ENCODE measurements at regions of chr1 and their contacts with region 1.

Region 1: GRCh38 chr1:48688102-48688760 is 88.5 kb downstream of the BEND5 start:
- DNase-seq: no peak
- H3K4me3 ChIP-seq: no peak overlapping the region
- H3K27ac ChIP-seq: no peak overlapping the region
- H3K4me1 ChIP-seq: peaks cover 0 to 5% (median 0%) of the 10 kb centered on the region in 4 experiments; a peak in 1 of 7 replicates
- H3K27me3 ChIP-seq: no peaks in the 10 kb centered on the region
- CTCF ChIP-seq: peak in 2 of 3 experiments; percentile 38 to 74; a peak in 2 of 4 replicates
- EP300 ChIP-seq: no peak
- POLR2A ChIP-seq: no peak
- RAD21 ChIP-seq: peak; percentile 40 to 46; a peak in 3 of 4 replicates

Region 2: DNA sequence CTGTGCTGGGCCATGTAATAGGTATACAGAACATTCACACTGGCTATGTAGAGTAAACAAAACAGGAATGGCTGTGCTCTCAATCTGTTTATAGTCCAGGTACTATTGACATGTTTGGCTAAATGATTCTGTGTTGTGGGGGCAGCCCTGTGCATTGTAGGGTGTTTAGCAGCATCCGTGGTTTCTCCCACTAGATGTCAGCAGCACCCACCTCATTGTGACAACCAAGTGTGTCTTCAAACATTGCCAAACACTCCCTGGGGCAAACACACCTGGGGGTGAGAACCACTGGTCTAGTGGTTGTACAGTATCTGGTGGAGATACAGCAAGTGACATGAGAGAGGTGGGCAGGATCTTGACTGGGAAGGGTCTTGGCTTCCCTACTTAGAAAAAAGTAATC is 135.8 kb before region 1 on chr1:
- CTCF ChIA-PET with region 1: no interaction called
- POLR2A ChIA-PET with region 1: no interaction called
- DNase-seq: peak in 1 of 2 experiments; percentile 49
- H3K4me3 ChIP-seq: no peak overlapping the region
- H3K27ac ChIP-seq: no peak overlapping the region
- H3K4me1 ChIP-seq: peaks cover 0 to 5% (median 1%) of the 10 kb centered on the region in 4 experiments; a peak in 1 of 7 replicates
- H3K27me3 ChIP-seq: no peaks in the 10 kb centered on the region
- CTCF ChIP-seq: peak; percentile 43 to 63 (median 47)
- EP300 ChIP-seq: no peak
- POLR2A ChIP-seq: no peak
- RAD21 ChIP-seq: peak; percentile 76 to 78

Region 3: DNA sequence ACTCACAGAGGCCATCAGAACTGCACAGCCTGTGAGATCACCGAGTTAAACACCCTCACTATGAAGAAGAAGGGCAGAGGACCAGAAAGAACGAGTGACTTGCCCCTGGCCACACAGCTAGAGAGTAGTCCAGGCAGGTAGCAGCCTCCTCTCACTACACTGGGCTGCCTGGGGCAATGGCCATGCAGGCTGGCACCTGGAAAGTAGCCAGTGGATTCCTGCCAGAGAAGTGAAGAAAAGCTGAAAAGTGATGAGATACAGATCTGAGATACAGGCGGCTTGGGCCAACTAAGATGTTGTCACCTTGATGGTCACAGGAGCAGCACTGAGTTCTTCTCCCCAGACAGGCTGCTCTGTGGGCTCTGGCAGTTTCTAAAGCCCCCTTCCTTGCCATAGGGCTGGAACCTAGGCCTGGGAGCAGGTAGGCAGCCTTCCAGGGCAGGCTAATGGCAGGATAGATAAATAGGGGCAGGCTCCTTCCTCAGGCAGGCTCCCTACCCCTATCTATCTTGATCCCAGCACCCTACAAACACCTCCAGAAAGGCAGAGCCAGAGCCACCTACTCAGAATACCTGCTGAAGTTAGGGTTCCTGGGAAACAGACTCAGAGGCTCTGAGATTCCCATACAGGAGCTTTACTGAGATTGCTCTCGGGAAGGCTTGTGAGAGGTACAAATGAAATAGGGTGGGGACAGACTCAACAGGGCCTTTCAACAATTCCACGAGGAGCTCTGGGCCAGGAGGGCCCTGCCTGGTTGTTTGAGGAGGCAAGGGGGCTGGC is 17.8 kb before region 1 on chr1:
- CTCF ChIA-PET with region 1: interaction called, 203 read pairs
- POLR2A ChIA-PET with region 1: no interaction called
- DNase-seq: no peak
- H3K4me3 ChIP-seq: no peak overlapping the region
- H3K27ac ChIP-seq: no peak overlapping the region
- H3K4me1 ChIP-seq: peaks cover 0 to 13% (median 7%) of the 10 kb centered on the region in 4 experiments; a peak in 4 of 7 replicates
- H3K27me3 ChIP-seq: no peaks in the 10 kb centered on the region; a peak in 1 of 7 replicates
- CTCF ChIP-seq: no peak
- EP300 ChIP-seq: no peak
- POLR2A ChIP-seq: no peak
- RAD21 ChIP-seq: no peak

Measured in H1 (cell line).